ENCODE measurements at regions of chr7 and their contacts with region 1.

Region 1: GRCh38 chr7:139359366-139360209 is at the start of gene LUC7L2:
- DNase-seq: peak; percentile 100
- ATAC-seq: peak; percentile 96 to 97
- total RNA-seq, gene LUC7L2: 46.4 to 52.3 TPM

Region 2: GRCh38 chr7:139340037-139340807 is 19.4 kb before region 1 on chr7:
- intact Hi-C with region 1: loop called in 1 of 2 experiments (anchors 2 kb)
- DNase-seq: peak; percentile 98
- ATAC-seq: peak; percentile 91 to 93

Region 3: DNA sequence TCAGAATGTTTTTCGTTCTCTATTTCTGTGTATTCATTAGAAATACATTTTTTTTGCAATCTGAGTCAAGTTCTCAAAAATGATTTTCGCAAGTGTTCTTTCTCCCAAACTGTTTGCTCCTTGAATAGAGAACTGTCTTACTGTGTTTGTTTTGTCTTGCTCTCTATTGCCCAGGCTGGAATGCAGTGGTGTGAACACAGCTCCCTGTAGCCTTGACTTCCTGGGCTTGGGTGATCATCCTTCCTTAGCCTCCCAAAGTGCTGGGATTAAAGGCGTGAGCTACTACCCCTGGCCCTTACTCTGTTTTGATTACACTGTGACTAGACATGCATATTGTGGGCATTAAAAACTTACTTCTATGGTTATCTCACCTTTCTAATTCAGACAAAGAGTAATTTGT is 56.8 kb after region 1 on chr7:
- intact Hi-C with region 1: loop called in 1 of 2 experiments (anchors 10 kb)
- DNase-seq: no peak
- ATAC-seq: no peak